ENCODE measurements at regions of chr19 and their contacts with region 1.

Region 1: GRCh38 chr19:10112895-10113591 is 1.6 kb downstream of the P2RY11 start:
- DNase-seq: peak; percentile 82
- H3K4me3 Mint-ChIP-seq: peak overlapping the region; percentile 67
- H3K27ac Mint-ChIP-seq: peak overlapping the region; percentile 95
- H3K4me1 Mint-ChIP-seq: peaks cover 57% of the 10 kb centered on the region
- H3K27me3 Mint-ChIP-seq: no peaks in the 10 kb centered on the region

Region 2: GRCh38 chr19:9934132-9934950 is 178.7 kb before region 1 on chr19:
- CTCF ChIA-PET with region 1: interaction called, 5 read pairs
- POLR2A ChIA-PET with region 1: interaction called, 6 read pairs
- intact Hi-C with region 1: loop called (anchors 5 kb)
- DNase-seq: peak; percentile 90
- H3K4me3 Mint-ChIP-seq: no peak overlapping the region
- H3K27ac Mint-ChIP-seq: no peak overlapping the region
- H3K4me1 Mint-ChIP-seq: peaks cover 28% of the 10 kb centered on the region
- H3K27me3 Mint-ChIP-seq: peaks cover 46% of the 10 kb centered on the region

Region 3: DNA sequence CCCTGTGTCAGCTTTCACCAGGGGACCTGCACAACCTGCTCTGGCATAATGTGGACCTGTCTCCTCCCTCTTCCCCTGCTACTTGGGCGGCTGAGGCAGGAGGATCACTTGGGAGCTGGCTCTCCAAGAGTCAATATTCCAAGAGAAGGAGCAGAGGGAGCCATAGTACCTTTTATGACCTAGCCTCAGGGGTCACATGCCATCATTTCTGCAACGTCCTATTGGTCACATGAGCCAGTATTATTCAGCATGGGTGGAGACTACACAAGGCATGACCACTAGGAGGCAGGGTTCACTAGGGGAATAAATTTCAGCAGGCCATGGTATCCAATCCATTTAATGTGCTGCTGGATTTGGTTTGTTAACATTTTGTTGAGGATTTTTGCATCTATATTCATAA is 38.9 kb before region 1 on chr19:
- CTCF ChIA-PET with region 1: interaction called, 4 read pairs
- POLR2A ChIA-PET with region 1: no interaction called
- intact Hi-C with region 1: loop called (anchors 1 kb)
- DNase-seq: peak; percentile 63
- H3K4me3 Mint-ChIP-seq: no peak overlapping the region
- H3K27ac Mint-ChIP-seq: no peak overlapping the region
- H3K4me1 Mint-ChIP-seq: no peaks in the 10 kb centered on the region
- H3K27me3 Mint-ChIP-seq: no peaks in the 10 kb centered on the region

Region 4: DNA sequence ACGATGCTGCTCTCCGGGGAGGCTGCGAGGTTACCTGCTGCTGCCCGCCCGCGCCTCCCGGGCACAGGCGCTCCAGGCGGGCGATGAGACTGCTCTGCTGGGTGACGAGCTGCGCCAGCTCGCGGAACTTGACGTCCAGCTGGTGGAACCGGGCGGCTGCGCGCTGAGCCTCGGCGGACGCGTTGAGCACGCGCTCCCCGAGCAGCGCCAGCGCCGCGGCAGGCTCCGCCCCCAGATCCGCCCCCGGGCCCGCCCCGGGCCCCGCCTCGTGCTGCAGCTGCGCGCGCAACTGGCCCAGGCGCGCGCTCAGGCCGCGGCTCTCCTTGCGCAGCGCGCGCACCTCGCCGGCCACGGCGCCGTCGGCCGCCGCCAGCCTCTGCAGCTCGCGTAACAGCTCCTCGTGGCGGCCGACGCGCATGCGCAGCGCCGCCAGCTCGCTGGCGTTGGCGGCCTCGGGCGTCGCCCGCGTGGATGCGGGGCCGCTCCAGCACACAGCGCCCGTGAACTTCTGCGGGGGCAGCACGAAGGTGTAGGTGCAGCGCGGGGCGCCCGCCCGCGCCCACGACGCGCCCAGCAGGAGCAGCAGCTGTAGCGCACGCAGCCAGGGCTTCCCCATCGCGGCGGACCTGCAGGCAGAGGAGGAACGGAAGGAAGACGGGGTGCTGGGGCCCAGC is 17.0 kb before region 1 on chr19:
- CTCF ChIA-PET with region 1: interaction called, 96 read pairs
- POLR2A ChIA-PET with region 1: interaction called, 75 read pairs
- intact Hi-C with region 1: loop called (anchors 2 kb)
- DNase-seq: peak; percentile 92
- H3K4me3 Mint-ChIP-seq: peak overlapping the region; percentile 62
- H3K27ac Mint-ChIP-seq: peak overlapping the region; percentile 23
- H3K4me1 Mint-ChIP-seq: peaks cover 34% of the 10 kb centered on the region
- H3K27me3 Mint-ChIP-seq: no peaks in the 10 kb centered on the region

Region 5: DNA sequence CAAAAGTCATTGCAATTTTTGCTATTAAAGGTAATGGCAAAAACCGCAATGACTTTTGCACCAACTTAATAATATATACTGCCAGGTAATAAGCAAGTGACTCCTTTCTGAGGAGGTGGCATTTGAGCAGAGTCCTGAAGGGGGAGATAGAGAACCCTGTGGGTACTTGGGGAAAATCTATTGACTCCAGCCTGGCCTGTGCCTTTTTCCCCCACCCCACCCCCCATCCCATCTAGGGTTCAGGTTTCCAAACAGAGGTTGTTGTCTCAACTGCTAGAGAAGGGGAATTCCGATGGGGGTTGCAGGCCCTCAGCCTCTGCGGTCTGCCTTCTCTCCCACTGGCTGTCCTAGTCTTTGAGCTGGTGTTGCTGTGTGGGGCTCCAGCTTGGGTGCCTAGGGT is 106.6 kb after region 1 on chr19:
- CTCF ChIA-PET with region 1: no interaction called
- POLR2A ChIA-PET with region 1: no interaction called
- intact Hi-C with region 1: no loop called
- DNase-seq: peak; percentile 61
- H3K4me3 Mint-ChIP-seq: no peak overlapping the region
- H3K27ac Mint-ChIP-seq: no peak overlapping the region
- H3K4me1 Mint-ChIP-seq: peaks cover 10% of the 10 kb centered on the region
- H3K27me3 Mint-ChIP-seq: no peaks in the 10 kb centered on the region

Region 6: DNA sequence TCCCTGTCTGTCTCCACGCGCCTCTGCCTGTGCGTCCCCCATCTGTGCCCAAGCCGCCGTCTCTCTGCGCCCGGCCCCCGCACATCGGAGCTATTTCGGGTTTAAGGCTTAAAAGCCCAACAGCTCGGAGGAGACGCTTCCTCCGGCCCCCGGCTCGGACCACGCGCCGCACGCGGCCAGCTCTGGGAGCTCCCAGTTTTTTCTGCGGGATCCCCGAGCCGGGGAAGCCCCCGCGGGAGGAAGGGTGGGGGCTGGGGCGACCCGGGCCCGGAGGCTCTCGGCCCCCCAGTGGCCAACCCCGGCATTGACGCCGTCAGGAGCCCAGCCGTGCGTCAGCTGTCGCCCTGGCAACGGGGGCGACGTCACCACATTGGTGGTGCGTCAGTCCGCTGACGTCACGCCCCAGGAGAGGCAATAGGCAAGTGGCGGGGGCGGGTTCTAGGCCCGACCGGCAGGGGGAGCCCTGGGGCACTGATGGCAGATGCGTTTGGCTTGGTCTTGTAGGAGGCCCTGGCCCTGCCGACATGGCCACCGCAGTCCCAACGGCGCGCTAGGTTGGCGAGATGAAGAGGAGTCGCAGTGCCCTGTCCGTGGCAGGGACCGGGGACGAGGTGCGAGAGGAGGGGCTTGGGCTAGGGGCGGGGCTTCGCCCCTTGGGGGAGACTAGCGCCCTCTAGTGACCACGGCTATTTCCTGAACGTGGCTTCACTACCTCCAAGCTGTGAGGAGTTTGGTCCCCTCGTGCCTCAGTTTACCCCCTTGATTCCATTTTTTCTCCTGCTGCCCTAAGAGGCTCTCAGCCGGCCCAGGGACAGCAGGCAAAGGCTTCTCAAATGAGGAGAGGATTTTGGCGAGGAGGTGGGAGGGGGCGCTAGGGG is 303.6 kb after region 1 on chr19:
- CTCF ChIA-PET with region 1: no interaction called
- POLR2A ChIA-PET with region 1: no interaction called
- intact Hi-C with region 1: no loop called
- DNase-seq: peak; percentile 96
- H3K4me3 Mint-ChIP-seq: peak overlapping the region; percentile 73
- H3K27ac Mint-ChIP-seq: peak overlapping the region; percentile 86
- H3K4me1 Mint-ChIP-seq: peaks cover 51% of the 10 kb centered on the region
- H3K27me3 Mint-ChIP-seq: peaks cover 35% of the 10 kb centered on the region